ENCODE measurements at regions of chr6 and their contacts with region 1.

Region 1: GRCh38 chr6:3977875-3978711 is 100.8 kb downstream of the FAM217A start:
- DNase-seq: peak; percentile 1 to 63 (median 42)
- H3K4me3 ChIP-seq: no peak overlapping the region
- H3K4me3 Mint-ChIP-seq: peak overlapping the region; percentile 1 to 86 (median 59)
- H3K27ac ChIP-seq: no peak overlapping the region
- H3K27ac Mint-ChIP-seq: peak overlapping the region in 6 of 8 donors; percentile 6 to 75 (median 46)
- H3K4me1 ChIP-seq: no peaks in the 10 kb centered on the region
- H3K4me1 Mint-ChIP-seq: peaks cover 7 to 12% (median 9%) of the 10 kb centered on the region in 3 donors
- H3K27me3 ChIP-seq: no peaks in the 10 kb centered on the region
- H3K27me3 Mint-ChIP-seq: peaks cover 2 to 3% of the 10 kb centered on the region in 2 donors

Region 2: GRCh38 chr6:3742426-3743344 is 235.4 kb before region 1 on chr6:
- CTCF ChIA-PET with region 1: interaction called, 28 read pairs
- POLR2A ChIA-PET with region 1: no interaction called
- DNase-seq: peak; percentile 73 to 89 (median 84)
- H3K4me3 ChIP-seq: peak overlapping the region; percentile 11
- H3K4me3 Mint-ChIP-seq: peak overlapping the region; percentile 31 to 87 (median 63)
- H3K27ac ChIP-seq: no peak overlapping the region
- H3K27ac Mint-ChIP-seq: peak overlapping the region in 6 of 8 donors; percentile 7 to 79 (median 57)
- H3K4me1 ChIP-seq: peaks cover 6% of the 10 kb centered on the region
- H3K4me1 Mint-ChIP-seq: peaks cover 9 to 13% (median 11%) of the 10 kb centered on the region in 3 donors
- H3K27me3 ChIP-seq: peaks cover 5% of the 10 kb centered on the region
- H3K27me3 Mint-ChIP-seq: peaks cover under 1 to 34% of the 10 kb centered on the region in 2 donors

Region 3: DNA sequence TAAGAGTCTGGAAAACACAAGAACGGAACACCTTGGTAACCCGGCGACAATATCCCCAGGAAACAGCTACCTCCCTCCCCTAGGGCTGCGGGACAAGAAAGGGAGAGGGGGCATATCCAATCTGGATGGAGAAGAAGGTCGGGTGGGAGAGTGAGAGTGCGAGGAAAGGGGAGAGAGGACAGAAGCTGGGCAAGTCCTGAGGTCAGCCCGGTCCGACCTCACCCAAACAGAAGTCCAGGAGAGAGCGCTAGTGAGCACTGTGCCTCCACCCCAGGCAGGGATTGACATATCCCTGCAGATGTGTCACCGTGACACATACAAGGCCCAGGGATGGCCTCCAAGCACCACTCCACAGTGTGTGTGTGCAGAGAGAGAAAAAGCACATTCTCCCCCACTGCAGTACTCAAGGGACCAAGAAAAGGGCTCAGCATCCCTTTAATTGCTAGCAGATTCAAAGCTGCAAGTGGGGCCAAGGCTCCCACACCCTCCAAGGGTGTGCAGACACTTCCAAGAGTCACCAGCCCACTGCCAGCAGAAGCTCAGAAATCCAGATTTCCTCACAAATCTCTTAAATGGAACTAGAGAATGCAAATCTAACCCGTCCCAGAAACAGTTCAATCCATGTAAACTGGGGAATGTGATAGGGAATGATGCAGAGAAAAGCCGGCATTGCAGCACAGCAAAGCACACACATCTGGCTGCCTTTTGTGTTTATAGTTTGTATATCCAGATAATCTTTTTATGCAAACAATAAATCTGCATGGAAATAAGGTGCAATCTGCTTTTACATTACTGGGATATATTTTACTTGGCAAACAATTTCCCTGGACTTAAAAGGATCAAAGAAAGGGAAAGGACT is 229.7 kb before region 1 on chr6:
- CTCF ChIA-PET with region 1: interaction called, 28 read pairs
- POLR2A ChIA-PET with region 1: no interaction called
- DNase-seq: no peak
- H3K4me3 ChIP-seq: no peak overlapping the region
- H3K4me3 Mint-ChIP-seq: peak overlapping the region in 2 of 7 donors; percentile 5 to 32
- H3K27ac ChIP-seq: no peak overlapping the region
- H3K27ac Mint-ChIP-seq: no peak overlapping the region
- H3K4me1 ChIP-seq: peaks cover 5% of the 10 kb centered on the region
- H3K4me1 Mint-ChIP-seq: peaks cover 0 to 14% (median 5%) of the 10 kb centered on the region in 3 donors
- H3K27me3 ChIP-seq: peaks cover 23% of the 10 kb centered on the region
- H3K27me3 Mint-ChIP-seq: peaks cover 20 to 39% of the 10 kb centered on the region in 2 donors

Region 4: GRCh38 chr6:3997177-3997770 is 19.2 kb after region 1 on chr6:
- CTCF ChIA-PET with region 1: interaction called, 13 read pairs
- POLR2A ChIA-PET with region 1: no interaction called
- DNase-seq: no peak
- H3K4me3 ChIP-seq: no peak overlapping the region
- H3K4me3 Mint-ChIP-seq: no peak overlapping the region
- H3K27ac ChIP-seq: no peak overlapping the region
- H3K27ac Mint-ChIP-seq: peak overlapping the region in 1 of 8 donors; percentile 32
- H3K4me1 ChIP-seq: no peaks in the 10 kb centered on the region
- H3K4me1 Mint-ChIP-seq: peaks cover 12 to 36% (median 16%) of the 10 kb centered on the region in 3 donors
- H3K27me3 ChIP-seq: no peaks in the 10 kb centered on the region
- H3K27me3 Mint-ChIP-seq: no peaks in the 10 kb centered on the region

Region 5: GRCh38 chr6:4008324-4009047 is 30.4 kb after region 1 on chr6:
- CTCF ChIA-PET with region 1: interaction called, 13 read pairs
- POLR2A ChIA-PET with region 1: interaction called, 3 read pairs
- DNase-seq: peak in 2 of 5 donors; percentile 41 to 53
- H3K4me3 ChIP-seq: no peak overlapping the region
- H3K4me3 Mint-ChIP-seq: no peak overlapping the region
- H3K27ac ChIP-seq: no peak overlapping the region
- H3K27ac Mint-ChIP-seq: peak overlapping the region in 7 of 8 donors; percentile 19 to 64 (median 54)
- H3K4me1 ChIP-seq: peaks cover 38% of the 10 kb centered on the region
- H3K4me1 Mint-ChIP-seq: peaks cover 45 to 65% (median 63%) of the 10 kb centered on the region in 3 donors
- H3K27me3 ChIP-seq: no peaks in the 10 kb centered on the region
- H3K27me3 Mint-ChIP-seq: no peaks in the 10 kb centered on the region

Region 6: GRCh38 chr6:4018172-4018905 is 40.2 kb after region 1 on chr6:
- CTCF ChIA-PET with region 1: interaction called, 16 read pairs
- POLR2A ChIA-PET with region 1: interaction called, 3 read pairs
- DNase-seq: peak; percentile 92 to 96 (median 95)
- H3K4me3 ChIP-seq: peak overlapping the region; percentile 74
- H3K4me3 Mint-ChIP-seq: peak overlapping the region; percentile 90 to 98 (median 96)
- H3K27ac ChIP-seq: peak overlapping the region; percentile 93
- H3K27ac Mint-ChIP-seq: peak overlapping the region; percentile 95 to 100 (median 98)
- H3K4me1 ChIP-seq: peaks cover 57% of the 10 kb centered on the region
- H3K4me1 Mint-ChIP-seq: peaks cover 63 to 87% (median 82%) of the 10 kb centered on the region in 3 donors
- H3K27me3 ChIP-seq: no peaks in the 10 kb centered on the region
- H3K27me3 Mint-ChIP-seq: no peaks in the 10 kb centered on the region

Measured in CD8-positive, alpha-beta memory T cell (primary cell).